ENCODE measurements at regions of chr1 and their contacts with region 1.

Region 1: GRCh38 chr1:999725-1000356 is at the start of gene HES4:
- DNase-seq: peak in 1 of 2 experiments; percentile 93
- H3K4me3 ChIP-seq: peak within 1 kb of the TSS; percentile 34 to 77 (median 48)
- H3K27ac ChIP-seq: no peak within 1 kb of the TSS
- H3K4me1 ChIP-seq: peaks cover 0 to 31% (median 15%) of the 10 kb centered on the region in 4 experiments; a peak in 6 of 7 replicates
- H3K27me3 ChIP-seq: peaks cover 47 to 89% (median 73%) of the 10 kb centered on the region in 4 experiments
- CTCF ChIP-seq: no peak
- EP300 ChIP-seq: no peak
- POLR2A ChIP-seq: no peak
- RAD21 ChIP-seq: no peak
- total RNA-seq, gene HES4: 1.2 and 2.8 TPM in 2 replicates

Region 2: DNA sequence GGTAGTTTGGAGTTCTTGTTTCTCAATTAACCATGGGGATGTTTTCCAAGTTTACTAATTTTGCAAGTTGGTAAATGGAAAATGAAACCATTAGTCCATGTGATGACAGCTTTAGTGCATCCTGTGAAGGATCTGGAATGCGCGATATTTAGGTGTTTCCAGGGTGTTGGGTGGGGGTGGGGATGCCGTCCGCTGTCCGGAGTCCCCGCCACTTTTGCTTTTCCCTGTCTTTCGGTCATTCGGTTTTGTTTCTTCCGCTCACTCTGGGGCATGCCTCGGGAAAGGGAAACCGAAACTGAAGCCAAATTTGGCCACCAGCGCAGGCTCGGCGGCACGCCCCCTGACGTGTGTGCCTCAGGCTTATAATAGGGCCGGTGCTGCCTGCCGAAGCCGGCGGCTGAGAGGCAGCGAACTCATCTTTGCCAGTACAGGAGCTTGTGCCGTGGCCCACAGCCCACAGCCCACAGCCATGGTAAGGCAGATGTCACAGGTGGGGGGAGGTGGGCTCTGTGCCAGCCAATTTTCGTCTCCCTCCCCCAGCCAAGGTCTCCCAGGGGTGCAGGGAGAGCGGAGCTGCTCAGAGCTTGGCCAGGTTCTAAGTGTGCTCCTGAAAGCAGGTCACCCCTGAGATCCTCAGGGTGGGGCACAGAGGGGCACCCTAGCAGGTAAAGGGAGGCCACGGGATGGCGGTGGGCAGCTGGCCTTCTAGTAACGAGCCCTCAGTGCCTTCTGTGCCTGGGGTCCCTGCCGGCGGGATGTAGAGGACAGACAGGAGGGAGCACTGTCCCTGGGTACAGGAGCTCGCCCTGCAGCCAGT is 13.5 kb after region 1 on chr1 and contains the start of gene ISG15:
- CTCF ChIA-PET with region 1: interaction called, 60 read pairs
- POLR2A ChIA-PET with region 1: interaction called, 40 read pairs
- DNase-seq: peak in 1 of 2 experiments; percentile 86
- H3K4me3 ChIP-seq: peak within 1 kb of the TSS; percentile 37 to 64 (median 59)
- H3K27ac ChIP-seq: peak within 1 kb of the TSS; percentile 61; the same call in 1 of the 2 replicates
- H3K4me1 ChIP-seq: peaks cover 0 to 21% (median 15%) of the 10 kb centered on the region in 4 experiments; a peak in 6 of 7 replicates
- H3K27me3 ChIP-seq: peaks cover 0 to 3% (median 0%) of the 10 kb centered on the region in 4 experiments; a peak in 3 of 7 replicates
- CTCF ChIP-seq: no peak
- EP300 ChIP-seq: no peak
- POLR2A ChIP-seq: peak in 1 of 2 experiments; percentile 53; a peak in 1 of 3 replicates
- RAD21 ChIP-seq: no peak
- total RNA-seq, gene ISG15: 27.7 and 29.3 TPM in 2 replicates

Region 3: GRCh38 chr1:1019122-1019999 is 19.5 kb after region 1 on chr1:
- CTCF ChIA-PET with region 1: interaction called, 60 read pairs
- POLR2A ChIA-PET with region 1: interaction called, 40 read pairs
- DNase-seq: peak in 1 of 2 experiments; percentile 84
- H3K4me3 ChIP-seq: peak overlapping the region in 2 of 4 experiments; percentile 45 to 83; a peak in 2 of 8 replicates
- H3K27ac ChIP-seq: no peak overlapping the region; the same call in 1 of the 2 replicates
- H3K4me1 ChIP-seq: peaks cover 2 to 36% (median 27%) of the 10 kb centered on the region in 4 experiments
- H3K27me3 ChIP-seq: no peaks in the 10 kb centered on the region
- CTCF ChIP-seq: peak in 2 of 3 experiments; percentile 38 to 42; a peak in 2 of 4 replicates
- EP300 ChIP-seq: no peak
- POLR2A ChIP-seq: no peak; a peak in 1 of 3 replicates
- RAD21 ChIP-seq: no peak

Region 4: DNA sequence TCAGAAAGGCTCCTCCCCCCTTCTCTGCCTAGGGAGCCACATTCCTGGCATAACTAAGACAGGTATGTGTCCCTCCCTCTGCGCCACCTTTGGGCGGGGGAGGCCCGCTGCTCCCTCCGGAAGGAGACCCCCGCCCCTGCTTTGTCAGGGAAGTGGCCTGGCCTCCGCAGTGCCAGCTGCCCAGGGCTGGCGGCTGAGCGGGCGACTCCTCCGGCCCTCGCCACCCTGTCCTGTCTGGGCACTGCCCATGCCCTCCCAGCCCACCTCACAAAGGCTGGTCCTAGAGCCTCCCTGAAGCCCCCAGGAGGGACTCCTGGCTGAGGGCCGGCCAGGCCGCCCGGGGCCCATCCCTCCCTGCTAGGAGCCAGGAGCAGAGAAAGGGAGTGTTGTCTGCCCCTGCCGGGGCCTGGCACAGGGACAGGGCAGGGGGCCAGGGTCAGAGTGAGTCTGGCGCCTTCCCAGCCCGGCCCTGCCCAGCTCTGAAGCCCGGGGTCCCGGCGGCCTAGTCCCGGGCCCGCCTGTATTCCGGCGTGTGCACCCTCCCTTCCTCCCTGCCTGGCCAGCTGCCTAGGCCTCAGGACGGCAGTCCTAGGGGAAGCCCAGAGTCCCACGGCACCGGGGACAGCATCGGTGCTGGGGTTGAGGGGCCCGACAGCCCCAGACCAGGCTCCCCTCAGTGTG is 25.1 kb after region 1 on chr1:
- CTCF ChIA-PET with region 1: interaction called, 11 read pairs
- POLR2A ChIA-PET with region 1: interaction called, 12 read pairs
- DNase-seq: no peak
- H3K4me3 ChIP-seq: peak overlapping the region in 1 of 4 experiments; percentile 36; a peak in 2 of 8 replicates
- H3K27ac ChIP-seq: peak overlapping the region; percentile 61; the same call in 1 of the 2 replicates
- H3K4me1 ChIP-seq: peaks cover 2 to 57% (median 38%) of the 10 kb centered on the region in 4 experiments
- H3K27me3 ChIP-seq: no peaks in the 10 kb centered on the region
- CTCF ChIP-seq: no peak
- EP300 ChIP-seq: peak; percentile 32 to 87; a peak in 2 of 3 replicates
- POLR2A ChIP-seq: peak in 1 of 2 experiments; percentile 30; a peak in 1 of 3 replicates
- RAD21 ChIP-seq: no peak

Region 5: DNA sequence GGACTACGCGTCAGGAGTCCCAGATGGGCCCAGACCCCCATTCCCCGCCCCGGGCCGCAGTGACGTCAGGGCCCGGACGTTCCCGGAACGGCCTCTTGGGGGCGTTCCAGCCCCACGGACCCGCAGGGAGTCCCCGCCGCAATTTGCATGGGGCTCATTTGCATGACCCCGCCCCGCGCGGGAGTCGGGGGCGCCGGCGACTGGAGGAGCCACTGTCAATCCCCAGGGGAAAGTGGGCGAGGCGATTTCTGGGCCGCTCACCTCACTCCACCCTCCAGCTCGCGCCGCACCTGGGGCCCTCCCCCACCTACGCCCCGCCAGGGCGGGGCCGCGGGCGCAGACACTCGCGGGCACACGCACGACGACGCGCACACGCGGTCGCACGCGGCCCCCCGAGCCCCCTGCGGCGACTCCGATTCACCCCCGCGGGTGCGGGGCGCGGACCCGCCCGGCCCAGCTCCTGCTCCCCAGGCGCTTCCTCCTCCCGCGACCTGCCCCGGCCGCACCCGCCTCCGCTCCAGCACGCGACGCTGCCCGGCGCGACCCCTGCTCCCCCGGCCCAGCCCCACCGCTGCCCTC is 33.3 kb after region 1 on chr1:
- CTCF ChIA-PET with region 1: interaction called, 8 read pairs
- POLR2A ChIA-PET with region 1: interaction called, 20 read pairs
- DNase-seq: peak; percentile 81 to 97
- H3K4me3 ChIP-seq: peak overlapping the region; percentile 32 to 67 (median 36); a peak in 5 of 8 replicates
- H3K27ac ChIP-seq: no peak overlapping the region
- H3K4me1 ChIP-seq: peaks cover 0 to 23% (median 11%) of the 10 kb centered on the region in 4 experiments; a peak in 6 of 7 replicates
- H3K27me3 ChIP-seq: peaks cover 0 to 18% (median 14%) of the 10 kb centered on the region in 4 experiments; a peak in 5 of 7 replicates
- CTCF ChIP-seq: peak in 2 of 3 experiments; percentile 75 to 76; a peak in 3 of 4 replicates
- EP300 ChIP-seq: peak in 1 of 2 experiments; percentile 47; a peak in 1 of 3 replicates
- POLR2A ChIP-seq: peak in 1 of 2 experiments; percentile 45; a peak in 1 of 3 replicates
- RAD21 ChIP-seq: peak; percentile 75 to 79

Region 6: GRCh38 chr1:1045129-1045528 is 45.3 kb after region 1 on chr1:
- CTCF ChIA-PET with region 1: no interaction called
- POLR2A ChIA-PET with region 1: no interaction called
- DNase-seq: no peak
- H3K4me3 ChIP-seq: no peak overlapping the region
- H3K27ac ChIP-seq: no peak overlapping the region
- H3K4me1 ChIP-seq: peaks cover 0 to 6% (median 2%) of the 10 kb centered on the region in 4 experiments; a peak in 4 of 7 replicates
- H3K27me3 ChIP-seq: peaks cover 0 to 3% (median 2%) of the 10 kb centered on the region in 4 experiments; a peak in 4 of 7 replicates
- CTCF ChIP-seq: no peak
- EP300 ChIP-seq: no peak
- POLR2A ChIP-seq: no peak
- RAD21 ChIP-seq: no peak

Region 7: GRCh38 chr1:1059494-1060280 is 59.8 kb after region 1 on chr1:
- CTCF ChIA-PET with region 1: interaction called, 13 read pairs
- POLR2A ChIA-PET with region 1: interaction called, 3 read pairs
- DNase-seq: peak in 1 of 2 experiments; percentile 98
- H3K4me3 ChIP-seq: peak overlapping the region; percentile 43 to 76 (median 48)
- H3K27ac ChIP-seq: no peak overlapping the region
- H3K4me1 ChIP-seq: peaks cover 0 to 18% (median 11%) of the 10 kb centered on the region in 4 experiments; a peak in 5 of 7 replicates
- H3K27me3 ChIP-seq: peaks cover 9 to 49% (median 34%) of the 10 kb centered on the region in 4 experiments
- CTCF ChIP-seq: no peak
- EP300 ChIP-seq: no peak
- POLR2A ChIP-seq: no peak
- RAD21 ChIP-seq: no peak

Measured in H1 (cell line).